Thyroid gland (tissue), 4 donors: ENCODE measurements at regions of chr7 and their contacts with region 1.

Region 1: DNA sequence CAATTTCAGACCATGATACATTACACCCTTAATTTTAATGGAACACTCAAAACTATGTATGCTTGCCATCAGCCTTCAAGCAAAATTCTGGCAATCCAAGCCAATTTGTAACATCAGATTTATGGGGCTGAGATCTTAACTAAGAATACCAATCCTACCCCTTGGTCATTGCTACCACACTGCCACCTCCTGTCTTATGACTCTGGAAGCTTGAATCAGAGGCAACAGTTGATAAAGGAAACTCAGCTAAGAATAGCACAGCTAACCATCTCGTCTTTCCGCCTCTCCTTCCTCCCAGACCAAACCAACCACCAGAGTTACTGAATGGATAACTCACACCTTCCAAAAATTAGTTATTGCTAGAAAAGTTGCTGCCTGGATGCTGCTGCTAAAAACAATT is 7.4 kb downstream of the IGF2BP3 start:
- DNase-seq: peak; percentile 26 to 35
- H3K4me3 ChIP-seq: no peak overlapping the region
- H3K27ac ChIP-seq: no peak overlapping the region
- H3K4me1 ChIP-seq: peaks cover 0 to 2% of the 10 kb centered on the region in 2 donors
- H3K27me3 ChIP-seq: peaks cover 17% of the 10 kb centered on the region
- CTCF ChIP-seq: peak in 4 of 6 experiments; percentile 46 to 62 (median 58)
- POLR2A ChIP-seq: no peak

Region 2: DNA sequence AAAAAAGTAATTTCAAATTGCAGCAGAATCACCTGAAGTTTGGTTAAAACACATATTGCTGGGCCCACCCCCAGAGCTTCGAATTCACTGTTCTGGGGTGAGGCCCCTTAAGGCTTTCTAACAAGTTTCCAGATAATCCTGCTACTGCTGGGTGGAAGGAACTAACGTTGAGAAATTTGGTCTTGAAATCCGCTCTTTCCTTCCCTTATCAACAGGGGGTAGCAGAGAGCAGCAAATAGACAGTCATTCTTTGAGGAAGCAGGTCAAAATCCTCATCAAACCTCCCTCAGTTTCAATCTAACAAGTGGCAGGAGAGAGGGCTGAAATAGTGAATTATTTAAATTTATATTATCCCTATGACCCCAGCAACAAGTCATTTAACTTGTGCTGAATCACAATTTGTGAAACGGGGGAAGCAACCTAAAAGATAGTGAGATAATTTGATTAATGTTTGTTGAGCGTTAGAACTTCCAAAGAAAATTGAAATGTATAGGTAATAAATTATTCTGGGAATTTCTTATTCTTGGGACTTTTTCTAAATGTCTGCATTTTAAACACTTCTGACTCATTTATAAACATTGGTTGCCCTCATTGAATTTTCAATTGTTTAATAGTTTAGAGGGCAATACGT is 185.4 kb before region 1 on chr7:
- intact Hi-C with region 1: loop called (anchors 5 kb)
- DNase-seq: peak in 1 of 2 donors; percentile 13
- H3K4me3 ChIP-seq: no peak overlapping the region
- H3K27ac ChIP-seq: no peak overlapping the region
- H3K4me1 ChIP-seq: no peaks in the 10 kb centered on the region
- H3K27me3 ChIP-seq: no peaks in the 10 kb centered on the region
- CTCF ChIP-seq: peak; percentile 41 to 83 (median 78)
- POLR2A ChIP-seq: no peak